ENCODE measurements at regions of chr14 and their contacts with region 1.

Region 1: GRCh38 chr14:92792891-92793290 is 1.2 kb upstream of the GOLGA5 start:
- DNase-seq: no peak
- H3K4me3 ChIP-seq: peak overlapping the region in 1 of 4 experiments; percentile 92; a peak in 1 of 8 replicates
- H3K27ac ChIP-seq: no peak overlapping the region
- H3K4me1 ChIP-seq: no peaks in the 10 kb centered on the region
- H3K27me3 ChIP-seq: no peaks in the 10 kb centered on the region
- CTCF ChIP-seq: peak in 1 of 3 experiments; percentile 9; a peak in 1 of 4 replicates
- EP300 ChIP-seq: no peak
- POLR2A ChIP-seq: no peak
- RAD21 ChIP-seq: no peak

Region 2: DNA sequence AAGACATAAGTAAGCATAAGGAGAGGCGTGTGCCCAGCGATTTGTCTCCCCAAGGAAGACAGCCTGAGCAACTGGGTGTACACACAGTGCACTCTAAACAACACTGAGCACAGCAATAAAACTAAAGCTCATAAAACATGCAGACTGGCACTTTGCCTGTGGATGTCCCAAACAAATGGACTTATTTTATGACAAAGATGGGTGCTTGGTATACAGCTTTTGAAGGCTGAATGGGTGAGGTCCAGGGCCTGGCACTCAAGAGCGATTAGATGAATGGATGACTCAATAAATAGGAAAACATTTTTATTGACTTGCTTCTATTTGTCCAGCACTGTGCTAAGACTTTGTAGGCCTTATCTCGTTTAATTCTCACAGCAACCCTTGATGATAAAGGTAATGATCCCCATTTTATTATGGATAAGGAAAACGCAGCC is 73.0 kb before region 1 on chr14:
- CTCF ChIA-PET with region 1: interaction called, 10 read pairs
- POLR2A ChIA-PET with region 1: no interaction called
- DNase-seq: no peak
- H3K4me3 ChIP-seq: no peak overlapping the region
- H3K27ac ChIP-seq: no peak overlapping the region
- H3K4me1 ChIP-seq: no peaks in the 10 kb centered on the region
- H3K27me3 ChIP-seq: no peaks in the 10 kb centered on the region; a peak in 1 of 7 replicates
- CTCF ChIP-seq: no peak
- EP300 ChIP-seq: no peak
- POLR2A ChIP-seq: no peak
- RAD21 ChIP-seq: no peak

Measured in H1 (cell line).